ENCODE measurements at regions of chr1 and their contacts with region 1.

Region 1: DNA sequence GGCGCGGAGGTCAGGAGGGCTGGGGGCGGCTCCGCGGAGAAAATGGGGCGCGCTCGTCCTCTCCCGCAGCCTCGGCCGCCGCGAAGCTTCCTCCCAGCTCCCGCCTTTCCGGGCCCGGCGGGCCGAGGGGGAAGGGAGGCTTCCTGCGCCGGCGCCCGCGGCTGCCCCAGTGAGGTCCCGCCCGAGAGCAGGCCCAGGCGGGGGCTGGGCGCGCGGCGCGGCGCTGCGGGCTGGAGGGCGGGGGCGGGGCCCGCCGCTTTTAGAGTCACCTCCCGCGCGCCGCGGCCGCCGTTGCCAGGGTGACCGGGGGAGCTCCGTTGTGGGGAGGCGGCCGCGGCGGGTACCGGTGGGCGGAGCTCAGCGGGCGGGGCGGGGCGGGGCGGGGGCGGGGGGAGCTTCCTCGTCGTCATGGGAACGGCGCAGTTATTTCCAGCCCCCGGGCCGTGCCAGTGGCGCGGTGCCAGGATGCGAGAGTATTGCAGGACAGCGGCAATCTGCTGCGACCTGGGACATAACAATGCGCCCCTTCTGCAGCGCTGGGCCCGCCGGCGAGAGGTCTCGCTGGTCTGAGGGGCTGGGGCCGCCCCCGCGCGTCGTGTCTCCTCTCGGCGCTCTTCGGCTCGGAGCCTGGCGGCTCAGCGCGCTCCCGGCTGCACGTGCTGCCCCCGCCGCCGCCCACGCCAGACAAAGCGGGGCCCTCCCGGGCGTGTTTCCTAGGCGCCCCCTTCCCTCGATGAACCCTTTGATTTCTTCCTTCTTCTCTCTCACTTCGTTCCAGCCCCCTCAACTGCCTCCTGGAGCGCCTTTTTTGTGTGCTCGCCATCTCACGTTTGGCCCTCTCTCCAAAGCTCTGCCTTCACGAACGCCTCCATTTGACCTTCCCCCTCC is 16.9 kb downstream of the IER5 start:
- DNase-seq: peak; percentile 87
- H3K4me3 Mint-ChIP-seq: peak overlapping the region; percentile 82
- H3K27ac Mint-ChIP-seq: peak overlapping the region; percentile 88
- H3K4me1 Mint-ChIP-seq: peaks cover 72% of the 10 kb centered on the region
- H3K27me3 Mint-ChIP-seq: peaks cover 34% of the 10 kb centered on the region

Region 2: DNA sequence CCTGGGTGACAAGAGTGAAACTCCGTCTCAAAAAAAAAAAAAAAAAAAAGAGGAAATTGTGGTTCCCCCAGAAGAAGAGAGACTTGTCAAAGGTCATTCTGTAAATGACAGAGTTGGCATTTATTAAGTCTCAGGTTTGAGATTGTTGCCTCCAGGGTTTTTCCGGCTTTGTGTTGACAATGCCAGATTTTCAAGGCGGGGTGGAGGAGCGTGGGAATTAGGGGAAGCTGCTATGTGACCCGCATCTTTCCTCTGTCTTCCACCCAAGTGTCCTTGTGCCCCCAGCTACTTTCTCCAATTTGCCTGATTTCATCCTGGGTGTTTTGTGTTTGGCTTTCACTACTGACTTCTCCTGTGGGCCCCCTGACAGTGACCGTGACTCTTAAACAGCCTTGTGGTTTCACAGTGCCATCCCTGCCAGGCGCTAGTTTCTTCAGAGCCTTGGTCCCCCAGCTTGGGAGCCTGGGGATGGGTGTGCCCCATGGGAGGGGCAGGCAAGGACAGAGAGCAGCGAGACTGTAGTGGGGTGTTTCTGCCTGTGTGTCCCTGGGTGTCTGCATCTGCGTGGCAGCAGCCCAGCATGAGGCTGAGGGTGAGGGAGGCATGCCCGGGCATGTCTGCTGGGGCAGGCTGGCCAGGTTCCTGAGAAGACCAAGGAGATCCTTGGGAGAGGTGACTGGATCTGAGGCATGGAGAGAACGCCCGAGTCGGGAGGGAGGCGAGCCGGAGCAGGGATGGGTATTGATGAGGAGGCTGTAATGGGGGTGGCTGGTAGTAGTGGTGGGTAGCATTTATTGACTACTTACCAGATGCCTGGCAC is 29.4 kb after region 1 on chr1:
- intact Hi-C with region 1: loop called (anchors 1 kb)
- DNase-seq: no peak
- H3K4me3 Mint-ChIP-seq: peak overlapping the region; percentile 57
- H3K27ac Mint-ChIP-seq: peak overlapping the region; percentile 93
- H3K4me1 Mint-ChIP-seq: peaks cover 78% of the 10 kb centered on the region
- H3K27me3 Mint-ChIP-seq: peaks cover 3% of the 10 kb centered on the region

Region 3: GRCh38 chr1:181206513-181206912 is 101.1 kb after region 1 on chr1:
- intact Hi-C with region 1: no loop called
- DNase-seq: no peak
- H3K4me3 Mint-ChIP-seq: no peak overlapping the region
- H3K27ac Mint-ChIP-seq: no peak overlapping the region
- H3K4me1 Mint-ChIP-seq: no peaks in the 10 kb centered on the region
- H3K27me3 Mint-ChIP-seq: peaks cover 2% of the 10 kb centered on the region